ENCODE measurements at regions of chr3 and their contacts with region 1.

Region 1: GRCh38 chr3:69306239-69307185 is 79.4 kb downstream of the FRMD4B start:
- DNase-seq: peak; percentile 57 to 70
- H3K4me3 ChIP-seq: no peak overlapping the region
- H3K27ac ChIP-seq: peak overlapping the region; percentile 35 to 56 (median 43)
- H3K4me1 ChIP-seq: peaks cover 0 to 9% of the 10 kb centered on the region in 2 donors
- H3K27me3 ChIP-seq: no peaks in the 10 kb centered on the region
- CTCF ChIP-seq: peak; percentile 72 to 90 (median 86)
- POLR2A ChIP-seq: no peak

Region 2: DNA sequence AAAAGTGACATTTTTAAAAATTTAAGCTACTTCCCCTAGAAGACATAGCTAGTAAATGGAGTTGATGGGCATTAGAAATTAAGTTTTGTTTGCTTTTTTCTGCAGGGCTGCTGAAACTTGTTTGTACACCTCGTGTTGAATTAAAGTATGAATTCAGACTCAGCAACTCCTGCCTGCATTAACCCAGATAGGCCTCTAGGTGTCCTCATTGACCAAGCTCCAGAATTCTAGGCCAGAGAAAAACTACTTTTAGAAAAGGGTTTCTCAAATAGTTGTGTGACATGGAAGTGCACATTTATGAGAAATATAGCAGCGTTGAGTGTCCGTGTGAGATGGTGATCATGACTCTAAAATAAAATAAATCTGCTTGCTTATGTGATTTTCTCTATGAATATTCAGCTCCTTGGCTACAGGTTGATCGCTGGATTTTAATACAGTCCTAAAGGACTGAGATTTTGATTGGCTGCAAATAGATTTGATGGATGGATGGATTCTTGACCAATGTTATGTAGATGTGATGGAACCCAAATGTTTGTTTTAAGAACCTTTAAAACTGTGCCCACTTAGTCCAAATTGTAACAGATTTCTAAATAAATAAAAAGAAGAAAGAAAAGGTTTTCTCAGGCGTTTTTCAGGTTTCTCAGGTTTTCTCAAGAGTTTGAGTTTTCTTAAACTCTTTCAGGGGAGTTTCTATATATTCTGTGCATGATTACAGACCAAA is 144.8 kb before region 1 on chr3:
- intact Hi-C with region 1: loop called (anchors 5 kb)
- DNase-seq: peak; percentile 14 to 18
- H3K4me3 ChIP-seq: no peak overlapping the region
- H3K27ac ChIP-seq: no peak overlapping the region
- H3K4me1 ChIP-seq: no peaks in the 10 kb centered on the region
- H3K27me3 ChIP-seq: no peaks in the 10 kb centered on the region
- CTCF ChIP-seq: peak; percentile 81 to 98 (median 93)
- POLR2A ChIP-seq: no peak

Region 3: DNA sequence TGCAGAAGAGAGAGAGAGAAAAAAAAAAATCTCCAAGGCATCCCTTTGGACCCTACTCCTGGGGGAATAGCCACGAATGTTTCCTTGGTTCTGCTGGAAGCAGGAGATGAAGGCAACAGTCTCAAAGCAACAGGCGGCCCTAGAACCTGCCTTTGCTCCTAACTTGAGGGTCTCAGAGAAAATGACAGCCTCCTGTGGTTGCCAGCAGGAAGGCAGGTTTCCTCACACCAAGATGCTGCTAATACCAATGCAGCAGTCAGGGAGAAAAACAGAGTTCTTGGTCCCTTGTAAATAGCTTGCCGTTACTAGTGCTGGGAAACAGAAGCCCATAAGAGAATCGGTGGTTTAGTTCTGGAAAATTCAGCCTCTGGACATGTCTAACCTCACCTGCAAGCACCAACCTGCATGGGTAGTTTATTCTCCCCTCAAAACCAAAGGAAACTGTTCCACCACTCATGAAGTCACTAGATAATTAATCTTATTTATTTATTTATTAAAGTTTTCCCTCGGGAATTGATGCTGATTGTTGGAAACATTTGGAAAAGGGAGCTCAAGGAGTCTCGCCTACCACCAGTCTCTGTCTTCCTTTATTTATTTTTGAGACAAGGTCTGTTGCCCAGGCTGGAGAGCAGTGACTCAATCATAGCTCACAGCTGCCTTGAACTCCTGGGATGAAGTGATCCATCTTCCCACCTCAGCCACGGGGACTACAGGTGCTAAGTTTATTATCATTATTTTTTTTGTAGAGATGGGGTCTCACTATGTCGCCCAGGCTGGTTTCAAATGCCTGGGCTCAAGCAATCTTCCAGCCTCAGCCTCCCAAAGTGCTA is 80.3 kb after region 1 on chr3:
- intact Hi-C with region 1: no loop called
- DNase-seq: no peak
- H3K4me3 ChIP-seq: peak overlapping the region in 1 of 3 donors; percentile 29
- H3K27ac ChIP-seq: peak overlapping the region in 1 of 3 donors; percentile 65
- H3K4me1 ChIP-seq: peaks cover 13 to 22% of the 10 kb centered on the region in 2 donors
- H3K27me3 ChIP-seq: no peaks in the 10 kb centered on the region
- CTCF ChIP-seq: no peak
- POLR2A ChIP-seq: no peak

Region 4: GRCh38 chr3:69410250-69410649 is 103.7 kb after region 1 on chr3:
- intact Hi-C with region 1: loop called (anchors 10 kb)
- DNase-seq: peak; percentile 65 to 73
- H3K4me3 ChIP-seq: no peak overlapping the region
- H3K27ac ChIP-seq: peak overlapping the region in 2 of 3 donors; percentile 63 to 70
- H3K4me1 ChIP-seq: peaks cover 32 to 45% of the 10 kb centered on the region in 2 donors
- H3K27me3 ChIP-seq: no peaks in the 10 kb centered on the region
- CTCF ChIP-seq: peak; percentile 46 to 79 (median 66)
- POLR2A ChIP-seq: no peak

Region 5: DNA sequence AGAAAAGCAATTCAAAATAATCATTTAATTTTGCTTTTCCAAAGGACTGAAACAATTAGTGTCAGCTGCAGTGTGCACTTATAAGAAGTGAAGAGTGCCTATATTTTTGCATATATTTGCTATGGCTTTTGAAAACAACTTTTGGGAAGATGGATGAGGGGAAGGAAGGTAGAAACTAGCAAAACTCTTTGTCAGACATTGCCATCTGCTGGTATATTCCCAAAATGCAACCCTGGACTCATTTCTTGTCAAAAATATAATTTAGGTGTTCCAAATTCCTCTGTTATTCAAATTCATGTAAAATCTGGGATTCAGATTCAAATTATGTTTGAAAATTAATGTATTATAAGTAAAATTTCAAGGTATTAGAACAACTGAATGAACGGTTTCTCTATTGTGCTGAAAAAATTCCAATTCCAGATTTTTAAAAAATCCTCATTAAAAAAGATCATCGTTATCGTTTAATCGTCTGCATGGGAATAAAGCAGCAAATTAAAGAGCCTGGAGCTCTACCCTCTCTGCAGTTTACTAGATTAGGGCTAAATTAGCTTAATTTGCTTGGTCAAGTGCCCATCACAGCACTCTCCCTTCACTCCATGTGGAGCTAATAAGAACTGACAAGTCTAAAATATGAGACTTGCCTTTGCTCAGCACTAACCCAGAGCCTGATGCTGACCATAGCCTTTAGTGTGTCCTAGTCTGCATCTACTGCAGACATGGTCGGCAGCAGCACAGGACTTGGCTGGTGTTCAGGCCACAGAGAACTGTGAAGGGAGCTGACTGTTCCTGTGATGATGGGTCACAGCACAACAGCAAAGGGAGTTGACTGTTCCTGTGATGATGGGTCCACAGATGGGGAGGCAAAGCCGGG is 364.8 kb after region 1 on chr3:
- intact Hi-C with region 1: loop called (anchors 10 kb)
- DNase-seq: peak; percentile 15 to 29
- H3K4me3 ChIP-seq: no peak overlapping the region
- H3K27ac ChIP-seq: no peak overlapping the region
- H3K4me1 ChIP-seq: peaks cover 0 to 5% of the 10 kb centered on the region in 2 donors
- H3K27me3 ChIP-seq: no peaks in the 10 kb centered on the region
- CTCF ChIP-seq: peak; percentile 64 to 89 (median 79)
- POLR2A ChIP-seq: no peak